ENCODE measurements at regions of chr19 and their contacts with region 1.

Region 1: GRCh38 chr19:36198119-36198518 is 16.3 kb downstream of the ZNF565 start:
- DNase-seq: no peak
- ATAC-seq: no peak
- H3K4me3 ChIP-seq: no peak overlapping the region
- H3K27ac ChIP-seq: no peak overlapping the region
- H3K4me1 ChIP-seq: no peaks in the 10 kb centered on the region
- H3K27me3 ChIP-seq: no peaks in the 10 kb centered on the region
- CTCF ChIP-seq: no peak

Region 2: DNA sequence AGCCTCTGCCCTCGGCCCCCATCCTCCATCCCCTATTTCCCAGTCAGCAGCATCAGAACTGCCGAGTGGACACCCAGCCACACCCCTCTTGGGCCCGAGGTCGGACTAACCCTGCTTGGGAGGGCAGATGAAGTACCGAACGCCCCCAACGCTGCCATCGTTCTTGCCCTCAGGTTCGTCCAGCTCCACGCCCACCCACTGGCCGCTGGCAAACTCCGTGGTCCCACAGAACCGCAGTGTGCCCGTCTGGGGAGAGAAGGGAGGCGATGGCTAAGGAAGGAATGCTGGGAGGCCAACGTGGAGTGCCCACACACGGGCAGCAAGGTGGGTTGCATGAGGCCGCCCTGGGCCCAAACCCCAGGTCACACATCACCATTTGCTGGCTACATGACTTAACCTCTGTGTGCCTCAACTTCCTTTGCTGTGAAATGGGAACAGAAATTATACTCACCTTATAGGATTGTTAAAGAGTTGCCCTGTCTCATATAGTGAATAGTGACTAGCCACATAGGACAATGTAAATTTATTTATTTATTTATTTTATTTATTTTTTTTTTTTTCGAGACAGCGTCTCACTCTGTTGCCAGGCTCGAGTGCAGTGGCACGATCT is 179.0 kb before region 1 on chr19:
- CTCF ChIA-PET with region 1: no interaction called
- POLR2A ChIA-PET with region 1: no interaction called
- intact Hi-C with region 1: no loop called
- DNase-seq: no peak
- ATAC-seq: no peak
- H3K4me3 ChIP-seq: no peak overlapping the region
- H3K27ac ChIP-seq: no peak overlapping the region
- H3K4me1 ChIP-seq: peaks cover 7% of the 10 kb centered on the region
- H3K27me3 ChIP-seq: no peaks in the 10 kb centered on the region
- CTCF ChIP-seq: no peak

Region 3: GRCh38 chr19:36103626-36104552 is 94.2 kb before region 1 on chr19:
- CTCF ChIA-PET with region 1: no interaction called
- POLR2A ChIA-PET with region 1: no interaction called
- intact Hi-C with region 1: no loop called
- DNase-seq: peak; percentile 51
- ATAC-seq: peak; percentile 65; the same call in 1 of the 2 replicates
- H3K4me3 ChIP-seq: no peak overlapping the region
- H3K27ac ChIP-seq: no peak overlapping the region
- H3K4me1 ChIP-seq: peaks cover 11% of the 10 kb centered on the region
- H3K27me3 ChIP-seq: no peaks in the 10 kb centered on the region
- CTCF ChIP-seq: no peak

Region 4: GRCh38 chr19:36489920-36490415 is 291.8 kb after region 1 on chr19:
- CTCF ChIA-PET with region 1: no interaction called
- POLR2A ChIA-PET with region 1: no interaction called
- intact Hi-C with region 1: loop called (anchors 5 kb)
- DNase-seq: peak; percentile 82
- ATAC-seq: peak; percentile 85
- H3K4me3 ChIP-seq: peak overlapping the region; percentile 96
- H3K27ac ChIP-seq: peak overlapping the region; percentile 83
- H3K4me1 ChIP-seq: no peaks in the 10 kb centered on the region
- H3K27me3 ChIP-seq: no peaks in the 10 kb centered on the region
- CTCF ChIP-seq: no peak